ENCODE measurements at regions of chr1 and their contacts with region 1.

Region 1: DNA sequence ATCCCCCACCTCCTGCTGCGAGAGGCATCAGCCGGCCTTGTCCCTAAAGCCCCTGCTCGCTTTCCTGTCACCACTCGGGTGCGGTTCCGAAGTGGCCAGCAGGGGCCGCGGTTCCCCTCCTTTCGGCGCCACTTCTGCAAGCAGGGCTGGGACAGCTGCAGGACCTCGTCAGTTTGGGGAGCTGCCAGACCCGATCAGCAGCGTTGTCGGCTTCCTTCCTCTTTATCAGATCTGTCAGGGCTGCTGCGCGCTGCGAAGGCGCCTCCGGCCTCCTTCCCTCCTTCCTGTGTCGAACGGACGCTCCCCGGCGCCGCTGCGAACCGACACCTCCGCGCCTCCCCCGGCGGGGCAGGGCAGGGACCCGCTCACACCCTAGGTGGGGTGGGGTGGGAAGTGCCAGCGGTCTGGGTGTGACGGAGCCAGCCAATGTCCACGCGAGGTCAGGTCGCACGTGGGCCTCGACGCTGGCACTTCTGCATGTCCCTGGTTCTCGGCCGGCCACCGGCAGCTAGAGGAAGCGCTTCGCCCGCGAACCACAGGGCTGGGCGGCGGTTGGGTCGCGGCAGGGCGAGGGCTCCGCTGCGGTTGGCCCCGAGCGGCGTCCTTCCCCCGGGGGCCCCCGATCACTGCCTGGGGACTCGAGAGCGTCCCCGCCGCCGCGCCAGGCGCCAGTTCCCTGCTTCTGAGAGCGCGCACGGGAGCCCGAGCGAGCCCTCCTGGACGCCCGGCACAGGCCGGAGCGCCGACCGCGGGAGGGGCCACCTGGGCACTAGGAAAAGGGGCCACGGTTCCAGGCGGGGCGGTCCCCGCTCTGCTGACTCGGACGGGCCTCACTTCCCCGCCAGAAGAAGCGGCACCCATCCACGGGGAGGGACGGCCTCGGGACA is 81.8 kb downstream of the RUNX3 start:
- DNase-seq: peak; percentile 85 to 95
- ATAC-seq: peak; percentile 84 to 95 (median 84)
- H3K4me3 ChIP-seq: peak overlapping the region; percentile 33
- H3K4me3 Mint-ChIP-seq: peak overlapping the region; percentile 78
- H3K27ac ChIP-seq: peak overlapping the region; percentile 87
- H3K27ac Mint-ChIP-seq: peak overlapping the region; percentile 86 to 88
- H3K4me1 ChIP-seq: peaks cover 41% of the 10 kb centered on the region
- H3K4me1 Mint-ChIP-seq: peaks cover 38 to 53% of the 10 kb centered on the region in 2 donors
- H3K27me3 ChIP-seq: no peaks in the 10 kb centered on the region
- H3K27me3 Mint-ChIP-seq: no peaks in the 10 kb centered on the region
- CTCF ChIP-seq: peak; percentile 90

Region 2: GRCh38 chr1:24567792-24568388 is 280.3 kb before region 1 on chr1:
- intact Hi-C with region 1: no loop called
- DNase-seq: peak in 1 of 2 donors; percentile 44
- ATAC-seq: peak; percentile 18 to 34 (median 26)
- H3K4me3 ChIP-seq: no peak overlapping the region
- H3K4me3 Mint-ChIP-seq: no peak overlapping the region
- H3K27ac ChIP-seq: no peak overlapping the region
- H3K27ac Mint-ChIP-seq: no peak overlapping the region
- H3K4me1 ChIP-seq: peaks cover 12% of the 10 kb centered on the region
- H3K4me1 Mint-ChIP-seq: peaks cover 9 to 11% of the 10 kb centered on the region in 2 donors
- H3K27me3 ChIP-seq: no peaks in the 10 kb centered on the region
- H3K27me3 Mint-ChIP-seq: peaks cover 3 to 4% of the 10 kb centered on the region in 2 donors
- CTCF ChIP-seq: no peak

Region 3: GRCh38 chr1:24805534-24806301 is 42.5 kb before region 1 on chr1:
- intact Hi-C with region 1: no loop called
- DNase-seq: no peak
- ATAC-seq: no peak
- H3K4me3 ChIP-seq: no peak overlapping the region
- H3K4me3 Mint-ChIP-seq: no peak overlapping the region
- H3K27ac ChIP-seq: no peak overlapping the region
- H3K27ac Mint-ChIP-seq: no peak overlapping the region
- H3K4me1 ChIP-seq: no peaks in the 10 kb centered on the region
- H3K4me1 Mint-ChIP-seq: no peaks in the 10 kb centered on the region
- H3K27me3 ChIP-seq: no peaks in the 10 kb centered on the region
- H3K27me3 Mint-ChIP-seq: no peaks in the 10 kb centered on the region
- CTCF ChIP-seq: no peak

Region 4: GRCh38 chr1:24861821-24862727 is 13.8 kb after region 1 on chr1:
- intact Hi-C with region 1: loop called (anchors 1 kb)
- DNase-seq: no peak
- ATAC-seq: peak; percentile 21 to 68 (median 43)
- H3K4me3 ChIP-seq: no peak overlapping the region
- H3K4me3 Mint-ChIP-seq: peak overlapping the region; percentile 82
- H3K27ac ChIP-seq: peak overlapping the region; percentile 63
- H3K27ac Mint-ChIP-seq: peak overlapping the region; percentile 81 to 86
- H3K4me1 ChIP-seq: peaks cover 80% of the 10 kb centered on the region
- H3K4me1 Mint-ChIP-seq: peaks cover 66 to 69% of the 10 kb centered on the region in 2 donors
- H3K27me3 ChIP-seq: no peaks in the 10 kb centered on the region
- H3K27me3 Mint-ChIP-seq: no peaks in the 10 kb centered on the region
- CTCF ChIP-seq: no peak

Region 5: DNA sequence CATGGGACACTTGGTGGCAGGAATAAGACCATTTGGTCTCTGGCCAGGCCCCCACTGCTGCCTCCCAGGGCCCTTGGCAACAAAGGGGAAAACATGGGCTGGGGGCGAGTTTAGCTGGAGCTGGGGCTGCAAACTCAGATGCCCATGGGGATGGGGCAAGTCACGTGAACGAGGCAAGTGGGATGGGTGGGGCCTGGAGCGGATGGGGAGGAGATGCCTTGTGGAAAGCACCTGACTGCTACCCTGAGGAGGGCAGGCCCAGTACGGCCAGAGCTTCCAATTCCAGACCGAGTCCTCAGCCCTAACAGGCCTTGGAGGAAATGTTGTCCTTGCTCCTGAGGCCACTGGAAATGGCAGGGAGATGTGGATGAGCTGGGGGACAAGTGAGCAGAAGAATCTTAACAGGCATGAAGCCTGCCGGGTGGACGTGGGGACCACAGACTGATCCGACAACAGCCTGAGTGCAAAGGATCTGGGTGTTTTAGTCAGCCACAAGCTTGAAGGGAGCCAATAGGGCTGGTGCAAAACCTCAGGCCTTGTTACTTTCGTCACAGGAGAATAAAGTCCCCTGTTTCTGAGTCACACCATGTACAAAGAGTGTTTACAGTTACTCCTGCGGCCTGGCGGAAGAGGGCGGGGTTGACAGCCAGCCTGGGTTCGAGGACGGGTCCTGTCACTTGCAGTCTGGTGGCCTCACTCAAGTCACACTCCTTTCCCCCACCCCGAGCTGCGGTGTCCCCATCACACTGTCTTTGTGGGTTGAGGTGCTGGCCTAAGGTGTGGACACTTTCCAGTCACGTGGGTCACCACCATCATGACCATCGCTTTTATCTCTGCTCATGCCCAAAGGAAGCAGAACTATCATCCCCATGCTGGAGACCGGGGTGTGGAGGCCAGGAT is 62.8 kb after region 1 on chr1:
- intact Hi-C with region 1: loop called (anchors 1 kb)
- DNase-seq: peak; percentile 94 to 95
- ATAC-seq: peak; percentile 64 to 84 (median 70)
- H3K4me3 ChIP-seq: peak overlapping the region; percentile 25
- H3K4me3 Mint-ChIP-seq: peak overlapping the region; percentile 83
- H3K27ac ChIP-seq: peak overlapping the region; percentile 100
- H3K27ac Mint-ChIP-seq: peak overlapping the region; percentile 99
- H3K4me1 ChIP-seq: peaks cover 99% of the 10 kb centered on the region
- H3K4me1 Mint-ChIP-seq: peaks cover 89 to 94% of the 10 kb centered on the region in 2 donors
- H3K27me3 ChIP-seq: no peaks in the 10 kb centered on the region
- H3K27me3 Mint-ChIP-seq: no peaks in the 10 kb centered on the region
- CTCF ChIP-seq: no peak

Region 6: DNA sequence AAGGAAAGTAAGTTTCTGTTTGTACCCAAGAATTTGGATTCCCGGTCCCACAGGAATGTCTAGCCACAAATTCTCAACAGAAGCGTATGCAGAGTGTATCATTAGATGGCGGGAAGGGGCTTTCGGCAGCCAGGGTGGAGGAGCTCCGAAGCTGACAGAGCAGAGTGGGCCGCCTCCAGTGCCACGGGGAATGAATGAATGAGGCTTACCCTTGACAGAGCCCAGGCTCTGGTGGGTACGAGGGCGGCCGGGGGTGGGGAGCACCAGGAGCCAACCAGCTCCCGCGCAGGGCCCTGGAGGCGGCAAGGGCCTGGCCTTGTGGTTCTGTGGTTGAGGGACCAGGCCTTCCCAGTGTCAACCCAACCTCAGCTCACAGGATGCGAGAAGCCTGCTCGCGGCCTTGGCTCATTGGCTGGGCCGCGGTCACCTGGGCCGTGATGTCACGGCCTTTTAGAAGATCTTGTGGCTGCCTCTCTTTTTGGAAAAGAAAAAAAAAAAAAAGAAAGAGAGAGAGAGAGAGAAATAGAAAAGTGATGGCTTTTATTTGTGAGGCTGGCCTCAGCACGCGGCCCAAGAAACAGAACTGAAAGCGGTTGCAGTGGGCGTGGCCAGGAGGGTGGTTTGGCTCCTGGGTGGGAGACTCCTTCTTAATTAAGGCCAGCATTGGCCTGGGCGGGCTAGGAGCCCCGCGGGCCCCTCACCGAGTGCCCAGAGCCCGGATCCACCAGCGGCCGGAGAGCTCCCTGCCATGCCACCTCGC is 116.8 kb after region 1 on chr1:
- intact Hi-C with region 1: loop called (anchors 2 kb)
- DNase-seq: peak; percentile 87 to 97
- ATAC-seq: peak; percentile 79 to 95 (median 91)
- H3K4me3 ChIP-seq: peak overlapping the region; percentile 39
- H3K4me3 Mint-ChIP-seq: peak overlapping the region; percentile 93
- H3K27ac ChIP-seq: peak overlapping the region; percentile 83
- H3K27ac Mint-ChIP-seq: peak overlapping the region; percentile 91 to 93
- H3K4me1 ChIP-seq: peaks cover 74% of the 10 kb centered on the region
- H3K4me1 Mint-ChIP-seq: peaks cover 23 to 34% of the 10 kb centered on the region in 2 donors
- H3K27me3 ChIP-seq: no peaks in the 10 kb centered on the region
- H3K27me3 Mint-ChIP-seq: peaks cover 10 to 22% of the 10 kb centered on the region in 2 donors
- CTCF ChIP-seq: no peak

Region 7: GRCh38 chr1:25037174-25038074 is 189.2 kb after region 1 on chr1:
- intact Hi-C with region 1: loop called (anchors 2 kb)
- DNase-seq: peak in 1 of 2 donors; percentile 83
- ATAC-seq: no peak
- H3K4me3 ChIP-seq: no peak overlapping the region
- H3K4me3 Mint-ChIP-seq: no peak overlapping the region
- H3K27ac ChIP-seq: no peak overlapping the region
- H3K27ac Mint-ChIP-seq: peak overlapping the region in 1 of 2 donors; percentile 25
- H3K4me1 ChIP-seq: peaks cover 81% of the 10 kb centered on the region
- H3K4me1 Mint-ChIP-seq: peaks cover 38 to 45% of the 10 kb centered on the region in 2 donors
- H3K27me3 ChIP-seq: no peaks in the 10 kb centered on the region
- H3K27me3 Mint-ChIP-seq: peaks cover 14 to 17% of the 10 kb centered on the region in 2 donors
- CTCF ChIP-seq: peak; percentile 32

Region 8: GRCh38 chr1:25148673-25149300 is 300.5 kb after region 1 on chr1:
- intact Hi-C with region 1: loop called (anchors 5 kb)
- DNase-seq: peak in 1 of 2 donors; percentile 75
- ATAC-seq: peak; percentile 64 to 91 (median 83)
- H3K4me3 ChIP-seq: no peak overlapping the region
- H3K4me3 Mint-ChIP-seq: no peak overlapping the region
- H3K27ac ChIP-seq: no peak overlapping the region
- H3K27ac Mint-ChIP-seq: no peak overlapping the region
- H3K4me1 ChIP-seq: peaks cover 5% of the 10 kb centered on the region
- H3K4me1 Mint-ChIP-seq: peaks cover 8 to 17% of the 10 kb centered on the region in 2 donors
- H3K27me3 ChIP-seq: peaks cover 5% of the 10 kb centered on the region
- H3K27me3 Mint-ChIP-seq: peaks cover 21 to 44% of the 10 kb centered on the region in 2 donors
- CTCF ChIP-seq: peak; percentile 67